ENCODE measurements at regions of chr20 and their contacts with region 1.

Region 1: GRCh38 chr20:18632196-18633009 is 44.5 kb downstream of the DTD1 start:
- DNase-seq: no peak
- ATAC-seq: peak; percentile 100
- H3K4me3 ChIP-seq: no peak overlapping the region
- H3K27ac ChIP-seq: no peak overlapping the region
- H3K4me1 ChIP-seq: no peaks in the 10 kb centered on the region
- H3K27me3 ChIP-seq: no peaks in the 10 kb centered on the region
- CTCF ChIP-seq: peak; percentile 90 to 98 (median 95)
- EP300 ChIP-seq: no peak
- POLR2A ChIP-seq: no peak
- RAD21 ChIP-seq: peak; percentile 100

Region 2: GRCh38 chr20:18412221-18412901 is 220.0 kb before region 1 on chr20:
- CTCF ChIA-PET with region 1: interaction called, 9 read pairs
- POLR2A ChIA-PET with region 1: no interaction called
- RAD21 ChIA-PET with region 1: interaction called, 3 read pairs
- SMC1A ChIA-PET with region 1: interaction called, 3 read pairs
- in situ Hi-C with region 1: no loop called
- intact Hi-C with region 1: loop called (anchors 10 kb)
- DNase-seq: peak; percentile 28
- ATAC-seq: peak; percentile 80
- H3K4me3 ChIP-seq: peak overlapping the region; percentile 41
- H3K27ac ChIP-seq: peak overlapping the region; percentile 82
- H3K4me1 ChIP-seq: peaks cover 9% of the 10 kb centered on the region
- H3K27me3 ChIP-seq: no peaks in the 10 kb centered on the region
- CTCF ChIP-seq: no peak
- EP300 ChIP-seq: no peak
- POLR2A ChIP-seq: no peak
- RAD21 ChIP-seq: no peak

Region 3: DNA sequence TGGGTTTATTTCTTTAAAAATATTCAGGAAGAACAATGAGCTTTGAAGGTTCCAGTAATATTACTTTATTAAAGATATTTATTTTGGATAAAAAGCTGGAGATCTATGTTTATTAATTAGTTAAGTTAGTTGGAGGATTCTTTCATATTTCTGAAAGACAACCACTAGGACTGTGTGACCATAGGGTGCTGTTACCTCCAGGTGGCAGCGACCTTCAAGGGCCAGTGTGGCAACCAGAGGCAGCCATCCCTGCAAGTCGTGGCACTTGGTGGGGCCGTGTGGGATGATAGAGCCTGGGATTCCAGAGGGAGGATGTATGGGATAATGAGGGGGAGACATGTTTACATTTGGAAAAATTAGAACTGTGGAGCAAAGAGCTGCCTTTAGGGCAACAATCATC is 85.7 kb after region 1 on chr20:
- CTCF ChIA-PET with region 1: interaction called, 6 read pairs
- POLR2A ChIA-PET with region 1: no interaction called
- RAD21 ChIA-PET with region 1: interaction called, 6 read pairs
- SMC1A ChIA-PET with region 1: interaction called, 13 read pairs
- in situ Hi-C with region 1: no loop called
- intact Hi-C with region 1: no loop called
- DNase-seq: no peak
- ATAC-seq: peak; percentile 66
- H3K4me3 ChIP-seq: no peak overlapping the region
- H3K27ac ChIP-seq: no peak overlapping the region
- H3K4me1 ChIP-seq: no peaks in the 10 kb centered on the region
- H3K27me3 ChIP-seq: no peaks in the 10 kb centered on the region
- CTCF ChIP-seq: peak in 2 of 3 experiments; percentile 36; a peak in 4 of 6 replicates
- EP300 ChIP-seq: no peak
- POLR2A ChIP-seq: no peak
- RAD21 ChIP-seq: peak; percentile 32; the same call in 1 of the 2 replicates

Region 4: DNA sequence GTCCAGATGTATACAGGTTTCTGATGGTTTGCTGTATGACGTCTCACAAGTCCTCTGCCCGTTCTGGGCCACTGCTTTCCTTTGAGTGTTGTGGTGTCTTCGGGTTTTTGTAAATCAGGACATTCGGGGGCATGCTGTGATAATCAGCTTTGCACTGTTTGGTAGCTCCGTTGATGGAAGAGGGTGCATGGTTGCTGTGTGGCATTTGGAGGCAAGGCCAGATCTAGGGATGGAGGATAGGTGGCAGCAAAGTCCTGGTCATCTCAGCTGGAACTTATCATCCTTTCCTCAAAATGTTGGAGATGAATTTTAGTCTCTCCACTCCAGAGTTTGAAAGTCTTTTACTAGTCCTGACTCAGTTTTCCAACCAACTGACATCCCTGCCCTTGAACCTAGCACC is 272.2 kb after region 1 on chr20:
- CTCF ChIA-PET with region 1: interaction called, 6 read pairs
- POLR2A ChIA-PET with region 1: no interaction called
- RAD21 ChIA-PET with region 1: interaction called, 5 read pairs
- SMC1A ChIA-PET with region 1: interaction called, 6 read pairs
- in situ Hi-C with region 1: no loop called
- intact Hi-C with region 1: loop called (anchors 10 kb)
- DNase-seq: no peak
- ATAC-seq: peak; percentile 42; the same call in 1 of the 3 replicates
- H3K4me3 ChIP-seq: no peak overlapping the region
- H3K27ac ChIP-seq: no peak overlapping the region
- H3K4me1 ChIP-seq: no peaks in the 10 kb centered on the region
- H3K27me3 ChIP-seq: no peaks in the 10 kb centered on the region; a peak in 1 of 4 replicates
- CTCF ChIP-seq: peak; percentile 10 to 44 (median 31); a peak in 3 of 6 replicates
- EP300 ChIP-seq: no peak
- POLR2A ChIP-seq: no peak
- RAD21 ChIP-seq: peak; percentile 37; the same call in 1 of the 2 replicates

Region 5: GRCh38 chr20:19074828-19075516 is 442.6 kb after region 1 on chr20:
- CTCF ChIA-PET with region 1: interaction called, 11 read pairs
- POLR2A ChIA-PET with region 1: no interaction called
- RAD21 ChIA-PET with region 1: interaction called, 4 read pairs
- SMC1A ChIA-PET with region 1: interaction called, 14 read pairs
- in situ Hi-C with region 1: loop called (anchors 10 kb)
- intact Hi-C with region 1: no loop called
- DNase-seq: peak; percentile 88
- ATAC-seq: peak; percentile 65
- H3K4me3 ChIP-seq: no peak overlapping the region
- H3K27ac ChIP-seq: peak overlapping the region; percentile 68
- H3K4me1 ChIP-seq: peaks cover 39% of the 10 kb centered on the region
- H3K27me3 ChIP-seq: no peaks in the 10 kb centered on the region
- CTCF ChIP-seq: no peak
- EP300 ChIP-seq: peak; percentile 59 to 68; a peak in 2 of 4 replicates
- POLR2A ChIP-seq: no peak
- RAD21 ChIP-seq: no peak

Region 6: DNA sequence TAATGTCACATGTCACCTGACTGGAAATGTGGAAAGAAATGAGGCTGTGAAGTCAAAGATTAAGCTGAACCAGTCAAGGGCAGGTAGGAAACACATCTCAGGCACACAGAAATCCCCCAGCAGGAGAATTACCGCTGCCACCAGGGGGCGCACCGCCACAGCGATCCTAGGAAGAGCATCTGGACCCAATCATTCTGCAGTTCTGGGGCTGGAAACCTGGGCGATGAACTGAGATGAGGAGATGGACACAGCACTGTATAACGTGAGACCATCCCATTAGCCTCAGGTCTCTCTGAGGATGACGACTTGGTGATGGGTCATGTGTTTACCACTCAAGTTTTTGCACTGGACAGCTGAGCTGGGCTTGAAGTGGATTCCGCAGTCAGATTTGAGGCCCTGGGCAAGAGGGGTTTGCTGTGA is 573.6 kb after region 1 on chr20:
- CTCF ChIA-PET with region 1: interaction called, 15 read pairs
- POLR2A ChIA-PET with region 1: no interaction called
- RAD21 ChIA-PET with region 1: interaction called, 6 read pairs
- SMC1A ChIA-PET with region 1: no interaction called
- in situ Hi-C with region 1: no loop called
- intact Hi-C with region 1: loop called (anchors 1 kb)
- DNase-seq: peak; percentile 8
- ATAC-seq: peak; percentile 90
- H3K4me3 ChIP-seq: no peak overlapping the region
- H3K27ac ChIP-seq: no peak overlapping the region
- H3K4me1 ChIP-seq: no peaks in the 10 kb centered on the region
- H3K27me3 ChIP-seq: no peaks in the 10 kb centered on the region; a peak in 3 of 4 replicates
- CTCF ChIP-seq: peak; percentile 82 to 85 (median 85)
- EP300 ChIP-seq: no peak
- POLR2A ChIP-seq: no peak
- RAD21 ChIP-seq: peak; percentile 80

Region 7: GRCh38 chr20:19661717-19662636 is 1029.6 kb after region 1 on chr20:
- CTCF ChIA-PET with region 1: interaction called, 16 read pairs
- POLR2A ChIA-PET with region 1: no interaction called
- RAD21 ChIA-PET with region 1: interaction called, 9 read pairs
- SMC1A ChIA-PET with region 1: interaction called, 6 read pairs
- in situ Hi-C with region 1: loop called (anchors 10 kb)
- intact Hi-C with region 1: loop called (anchors 1 kb)
- DNase-seq: no peak
- ATAC-seq: peak; percentile 72
- H3K4me3 ChIP-seq: no peak overlapping the region
- H3K27ac ChIP-seq: no peak overlapping the region
- H3K4me1 ChIP-seq: peaks cover 11% of the 10 kb centered on the region
- H3K27me3 ChIP-seq: no peaks in the 10 kb centered on the region
- CTCF ChIP-seq: peak; percentile 96 to 99 (median 99); a peak in 5 of 6 replicates
- EP300 ChIP-seq: no peak
- POLR2A ChIP-seq: no peak
- RAD21 ChIP-seq: peak; percentile 99